Colonic mucosa (tissue), 4 donors: ENCODE measurements at regions of chrX and their contacts with region 1.

Region 1: GRCh38 chrX:39814391-39814790 is 283.4 kb downstream of the BCOR start:
- DNase-seq: peak; percentile 26
- H3K4me3 ChIP-seq: no peak overlapping the region
- H3K27ac ChIP-seq: peak overlapping the region; percentile 7
- H3K4me1 ChIP-seq: no peaks in the 10 kb centered on the region
- H3K27me3 ChIP-seq: no peaks in the 10 kb centered on the region
- CTCF ChIP-seq: peak; percentile 33

Region 2: DNA sequence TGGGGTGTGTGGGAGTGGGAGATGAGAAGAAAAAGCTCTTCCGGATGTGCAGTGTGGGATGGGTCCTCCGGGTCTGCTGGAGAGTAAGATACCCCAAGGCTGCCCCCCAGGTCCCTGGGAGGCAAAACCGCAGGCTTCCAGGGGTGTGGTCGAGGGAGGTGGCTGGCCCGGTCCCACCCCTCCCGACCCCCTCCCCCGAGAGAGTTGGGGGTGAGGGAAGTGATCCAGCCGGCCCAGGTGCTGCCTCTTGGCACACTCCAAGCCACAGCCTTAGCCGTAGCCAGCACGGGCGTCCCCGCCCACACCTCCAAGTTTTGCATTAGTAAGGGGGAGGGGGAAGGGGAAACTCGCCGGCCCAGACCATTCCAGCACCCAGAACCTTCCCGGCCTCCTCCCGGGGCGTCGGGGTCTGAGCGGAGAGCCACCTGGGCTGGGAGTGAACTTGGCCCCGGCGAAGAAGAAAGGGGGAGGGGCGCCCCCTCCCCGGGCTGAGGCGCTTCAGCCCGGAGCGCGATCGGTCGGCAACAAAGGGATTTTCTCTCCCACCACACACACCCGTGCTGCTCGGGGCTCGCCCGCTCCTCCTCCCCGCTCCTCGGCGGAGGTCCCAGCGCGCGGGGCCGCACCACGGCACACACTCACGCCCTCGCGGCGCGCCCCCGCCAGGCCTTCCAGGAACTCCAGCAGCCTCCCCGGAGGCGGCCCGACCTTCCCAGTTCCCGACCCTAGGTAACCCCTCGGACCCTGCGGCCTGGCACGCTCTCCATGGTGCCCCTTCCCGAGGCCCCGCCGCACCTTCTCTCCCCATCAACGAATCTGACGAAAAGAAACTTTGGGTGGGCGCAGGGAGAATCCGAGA is 269.0 kb after region 1 on chrX:
- intact Hi-C with region 1: loop called (anchors 10 kb)
- DNase-seq: no peak
- H3K4me3 ChIP-seq: peak overlapping the region; percentile 34
- H3K27ac ChIP-seq: no peak overlapping the region
- H3K4me1 ChIP-seq: peaks cover 6% of the 10 kb centered on the region
- H3K27me3 ChIP-seq: peaks cover 18% of the 10 kb centered on the region
- CTCF ChIP-seq: no peak

Region 3: DNA sequence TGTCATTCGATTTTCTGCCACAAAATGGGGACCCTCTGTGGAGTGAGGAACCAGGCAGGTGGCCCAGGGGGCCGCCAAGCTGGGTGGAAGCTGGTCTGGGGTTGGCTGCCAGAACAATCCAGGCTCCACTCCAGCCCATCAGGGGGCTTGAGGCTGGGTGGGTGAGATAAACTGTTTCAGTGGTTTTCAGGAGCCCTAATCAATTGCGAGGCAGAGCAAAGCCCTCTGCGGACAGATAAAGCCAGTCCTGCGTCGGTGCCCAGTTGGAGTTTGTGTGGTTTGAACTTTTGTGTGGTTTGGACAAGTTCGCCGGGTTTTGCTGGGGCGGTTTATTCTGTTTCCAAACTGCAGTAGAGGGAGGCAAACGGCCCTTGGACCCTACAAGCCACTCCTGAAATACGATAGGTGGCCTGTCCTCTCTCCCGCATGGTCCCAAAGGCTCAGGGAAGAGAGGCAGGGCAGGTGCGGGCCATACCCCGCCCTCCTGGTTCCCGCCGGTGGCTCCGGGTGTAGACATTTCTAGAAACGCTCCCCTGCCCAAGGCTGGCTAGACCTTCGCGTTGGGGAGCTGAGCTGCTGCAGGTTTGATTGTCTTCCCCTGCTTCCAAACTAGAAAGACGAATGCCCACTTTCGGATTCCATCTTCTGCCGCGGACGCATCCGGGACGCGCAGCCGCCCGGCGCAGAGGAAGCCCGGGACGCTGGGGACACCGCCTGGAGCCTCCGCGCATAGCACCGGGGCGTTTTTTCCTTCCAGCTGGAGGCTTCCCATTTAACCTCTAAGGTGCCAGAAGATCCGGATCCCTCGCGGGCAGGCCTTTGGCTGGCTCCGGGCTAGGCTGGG is 452.3 kb after region 1 on chrX:
- intact Hi-C with region 1: loop called (anchors 5 kb)
- DNase-seq: peak; percentile 77
- H3K4me3 ChIP-seq: peak overlapping the region; percentile 28
- H3K27ac ChIP-seq: no peak overlapping the region
- H3K4me1 ChIP-seq: no peaks in the 10 kb centered on the region
- H3K27me3 ChIP-seq: no peaks in the 10 kb centered on the region
- CTCF ChIP-seq: peak; percentile 54